Activated CD4-positive, alpha-beta T cell treated with anti-CD3 and anti-CD28 coated beads for 36 hours (primary cell): ENCODE measurements at regions of chr7 and their contacts with region 1.

Region 1: GRCh38 chr7:104971290-104972071 is 42.5 kb upstream of the KMT2E start:
- DNase-seq: no peak
- ATAC-seq: no peak
- H3K4me3 Mint-ChIP-seq: no peak overlapping the region
- H3K27ac Mint-ChIP-seq: no peak overlapping the region
- H3K4me1 Mint-ChIP-seq: peaks cover 12% of the 10 kb centered on the region
- H3K27me3 Mint-ChIP-seq: no peaks in the 10 kb centered on the region

Region 2: GRCh38 chr7:104956753-104957450 is 14.6 kb before region 1 on chr7:
- CTCF ChIA-PET with region 1: interaction called, 10 read pairs
- POLR2A ChIA-PET with region 1: no interaction called
- intact Hi-C with region 1: no loop called
- DNase-seq: peak; percentile 64
- ATAC-seq: peak; percentile 87
- H3K4me3 Mint-ChIP-seq: peak overlapping the region; percentile 38
- H3K27ac Mint-ChIP-seq: peak overlapping the region; percentile 96
- H3K4me1 Mint-ChIP-seq: peaks cover 47% of the 10 kb centered on the region
- H3K27me3 Mint-ChIP-seq: no peaks in the 10 kb centered on the region